ENCODE measurements at regions of chr14 and their contacts with region 1.

Region 1: GRCh38 chr14:57390028-57390805 is at the start of gene NAA30:
- DNase-seq: peak; percentile 94
- H3K4me3 ChIP-seq: peak within 1 kb of the TSS; percentile 85
- H3K27ac ChIP-seq: peak within 1 kb of the TSS; percentile 80
- H3K4me1 ChIP-seq: no peaks in the 10 kb centered on the region
- H3K27me3 ChIP-seq: no peaks in the 10 kb centered on the region
- CTCF ChIP-seq: no peak
- total RNA-seq, gene NAA30: 16.6 to 21.4 TPM

Region 2: GRCh38 chr14:57275023-57275664 is 115.1 kb before region 1 on chr14:
- intact Hi-C with region 1: loop called (anchors 10 kb)
- DNase-seq: no peak
- H3K4me3 ChIP-seq: no peak overlapping the region
- H3K27ac ChIP-seq: no peak overlapping the region
- H3K4me1 ChIP-seq: peaks cover 2% of the 10 kb centered on the region
- H3K27me3 ChIP-seq: no peaks in the 10 kb centered on the region
- CTCF ChIP-seq: no peak

Measured in colonic mucosa (tissue), 4 donors.